PC-9 (cell line): ENCODE measurements at regions of chr6 and their contacts with region 1.

Region 1: DNA sequence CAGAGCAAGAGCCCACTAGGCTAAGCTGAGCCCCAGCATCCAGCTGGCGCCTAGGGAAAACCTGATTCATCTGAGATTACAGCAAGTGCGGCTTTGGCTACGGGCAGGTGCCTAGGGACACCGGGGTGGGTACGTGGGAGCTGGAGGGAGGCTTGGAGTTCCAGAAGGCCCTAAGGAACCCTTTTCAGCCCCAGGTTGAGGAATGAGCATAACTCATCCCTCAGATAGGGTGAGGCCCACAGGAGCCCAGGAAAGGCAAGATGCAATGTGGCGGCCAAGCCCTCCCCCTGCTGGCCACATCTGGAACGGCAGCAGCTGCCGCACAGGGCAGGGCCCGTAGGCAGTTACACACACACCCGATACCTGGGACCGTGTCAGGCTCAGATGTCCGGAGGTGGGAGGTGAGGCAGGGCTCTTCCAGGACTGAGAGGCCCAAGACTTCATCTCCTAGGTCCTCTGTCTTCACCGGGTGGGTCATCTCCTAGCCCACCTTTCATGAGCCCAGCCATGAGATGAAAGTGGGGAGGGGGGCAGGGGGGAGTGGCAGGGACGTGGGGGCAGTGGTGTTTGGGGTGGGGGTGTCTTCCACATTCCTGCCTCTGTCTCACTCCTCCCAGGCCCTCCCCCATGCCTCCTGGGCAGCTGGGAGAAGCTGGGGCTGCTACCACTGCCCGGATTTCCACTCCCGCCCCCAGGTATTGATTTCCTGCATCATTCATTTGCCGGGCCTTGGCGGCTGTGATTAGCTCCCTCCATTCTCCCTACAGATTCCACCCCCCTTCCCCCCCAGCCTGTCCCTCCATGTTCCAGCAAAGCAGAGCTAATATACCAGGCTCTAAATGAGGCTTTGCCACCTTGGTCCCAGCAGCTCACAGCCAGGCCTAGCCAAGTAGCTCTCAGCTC is 5.5 kb downstream of the MDGA1 start:
- DNase-seq: peak; percentile 58 to 82
- H3K4me3 ChIP-seq: no peak overlapping the region
- H3K27ac ChIP-seq: no peak overlapping the region
- H3K4me1 ChIP-seq: peaks cover 4% of the 10 kb centered on the region; the same call in 1 of the 2 replicates
- H3K27me3 ChIP-seq: peaks cover 27% of the 10 kb centered on the region
- CTCF ChIP-seq: peak; percentile 99

Region 2: DNA sequence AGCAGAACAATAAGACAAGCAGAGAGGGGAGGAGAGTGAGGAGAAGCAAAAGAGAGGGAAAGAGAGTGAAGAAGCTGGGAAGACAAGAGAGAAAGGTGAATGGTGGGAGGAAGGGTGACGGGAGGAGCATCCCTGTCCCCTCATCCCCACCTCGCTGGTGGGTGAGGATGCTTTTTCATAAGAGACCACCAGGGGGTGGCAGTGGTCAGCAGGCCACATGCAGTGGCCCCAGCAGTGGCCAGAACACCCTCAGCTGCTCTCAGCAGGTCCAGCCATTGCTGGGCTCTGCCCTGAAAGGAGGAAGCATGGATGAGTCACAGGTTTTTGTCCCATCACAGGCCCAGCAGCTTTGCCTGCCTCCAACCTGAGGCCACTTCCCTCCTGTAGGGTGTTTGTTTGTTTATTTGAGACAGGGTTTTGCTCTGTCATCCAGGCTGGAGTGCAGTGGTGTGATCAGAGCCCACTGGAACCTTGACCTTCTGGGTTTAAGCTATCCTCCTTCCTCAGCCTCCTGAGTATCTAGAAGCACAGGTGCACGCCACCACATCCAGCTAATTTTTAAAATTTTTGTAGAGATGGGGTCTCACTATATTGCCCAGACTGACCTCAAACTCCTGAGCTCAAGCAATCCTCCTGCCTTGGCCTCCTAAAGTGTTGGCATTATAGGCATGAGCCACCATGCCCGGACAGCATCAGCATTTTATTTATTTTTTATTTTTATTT is 662.7 kb before region 1 on chr6:
- CTCF ChIA-PET with region 1: no interaction called
- POLR2A ChIA-PET with region 1: no interaction called
- intact Hi-C with region 1: loop called (anchors 10 kb)
- DNase-seq: peak; percentile 84 to 96
- H3K4me3 ChIP-seq: no peak overlapping the region
- H3K27ac ChIP-seq: peak overlapping the region; percentile 81
- H3K4me1 ChIP-seq: peaks cover 25% of the 10 kb centered on the region
- H3K27me3 ChIP-seq: no peaks in the 10 kb centered on the region
- CTCF ChIP-seq: peak; percentile 83

Region 3: GRCh38 chr6:37483917-37484785 is 208.0 kb before region 1 on chr6:
- CTCF ChIA-PET with region 1: no interaction called
- POLR2A ChIA-PET with region 1: no interaction called
- intact Hi-C with region 1: loop called (anchors 2 kb)
- DNase-seq: peak in 1 of 2 experiments; percentile 65
- H3K4me3 ChIP-seq: no peak overlapping the region
- H3K27ac ChIP-seq: no peak overlapping the region
- H3K4me1 ChIP-seq: no peaks in the 10 kb centered on the region
- H3K27me3 ChIP-seq: no peaks in the 10 kb centered on the region
- CTCF ChIP-seq: peak; percentile 82

Region 4: DNA sequence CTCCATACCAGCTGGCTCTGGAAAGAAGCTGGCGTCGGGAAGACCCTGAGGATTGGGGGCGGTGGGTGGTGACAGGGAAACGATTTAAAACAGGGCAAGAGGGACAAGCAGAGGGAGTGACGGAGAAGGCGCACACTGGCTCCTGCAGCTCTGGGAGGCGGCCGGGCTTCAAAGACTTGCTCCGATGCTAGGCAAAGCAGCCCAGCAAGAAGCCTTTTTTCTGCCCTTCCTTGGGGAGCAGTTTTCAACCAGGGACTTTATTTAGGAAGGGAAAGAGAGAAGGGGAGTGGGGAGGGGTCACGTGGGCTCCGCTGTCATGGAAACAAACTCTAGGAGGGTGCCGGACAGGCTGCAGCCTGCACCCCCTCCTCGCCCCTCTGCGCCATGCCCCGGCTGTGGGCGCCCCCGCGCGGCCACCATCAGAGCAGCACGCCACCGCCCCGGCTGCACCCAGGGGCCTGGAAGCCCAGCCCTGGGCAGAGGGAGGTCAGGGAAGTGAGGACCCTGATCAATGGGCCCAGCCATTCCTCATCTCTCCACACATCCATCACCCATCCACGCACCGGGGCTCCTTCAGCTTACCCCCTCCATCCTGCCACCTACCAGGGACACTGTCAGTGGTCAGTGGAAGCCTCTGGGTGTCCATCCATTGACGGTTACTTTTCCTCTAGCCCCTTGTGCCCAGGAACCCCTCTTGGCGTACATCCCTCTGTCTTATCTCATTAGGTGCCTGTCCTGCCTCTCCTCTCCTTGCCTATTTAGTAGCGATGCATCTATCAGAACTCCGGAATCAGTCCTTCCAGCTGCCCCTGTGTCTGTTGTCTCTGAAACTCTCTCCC is 125.8 kb before region 1 on chr6:
- CTCF ChIA-PET with region 1: no interaction called
- POLR2A ChIA-PET with region 1: no interaction called
- intact Hi-C with region 1: loop called (anchors 2 kb)
- DNase-seq: peak in 1 of 2 experiments; percentile 54
- H3K4me3 ChIP-seq: no peak overlapping the region
- H3K27ac ChIP-seq: no peak overlapping the region
- H3K4me1 ChIP-seq: no peaks in the 10 kb centered on the region
- H3K27me3 ChIP-seq: no peaks in the 10 kb centered on the region
- CTCF ChIP-seq: peak; percentile 78

Region 5: GRCh38 chr6:37583261-37583660 is 108.9 kb before region 1 on chr6:
- CTCF ChIA-PET with region 1: no interaction called
- POLR2A ChIA-PET with region 1: no interaction called
- intact Hi-C with region 1: no loop called
- DNase-seq: no peak
- H3K4me3 ChIP-seq: no peak overlapping the region
- H3K27ac ChIP-seq: no peak overlapping the region
- H3K4me1 ChIP-seq: peaks cover 29% of the 10 kb centered on the region
- H3K27me3 ChIP-seq: no peaks in the 10 kb centered on the region
- CTCF ChIP-seq: no peak

Region 6: DNA sequence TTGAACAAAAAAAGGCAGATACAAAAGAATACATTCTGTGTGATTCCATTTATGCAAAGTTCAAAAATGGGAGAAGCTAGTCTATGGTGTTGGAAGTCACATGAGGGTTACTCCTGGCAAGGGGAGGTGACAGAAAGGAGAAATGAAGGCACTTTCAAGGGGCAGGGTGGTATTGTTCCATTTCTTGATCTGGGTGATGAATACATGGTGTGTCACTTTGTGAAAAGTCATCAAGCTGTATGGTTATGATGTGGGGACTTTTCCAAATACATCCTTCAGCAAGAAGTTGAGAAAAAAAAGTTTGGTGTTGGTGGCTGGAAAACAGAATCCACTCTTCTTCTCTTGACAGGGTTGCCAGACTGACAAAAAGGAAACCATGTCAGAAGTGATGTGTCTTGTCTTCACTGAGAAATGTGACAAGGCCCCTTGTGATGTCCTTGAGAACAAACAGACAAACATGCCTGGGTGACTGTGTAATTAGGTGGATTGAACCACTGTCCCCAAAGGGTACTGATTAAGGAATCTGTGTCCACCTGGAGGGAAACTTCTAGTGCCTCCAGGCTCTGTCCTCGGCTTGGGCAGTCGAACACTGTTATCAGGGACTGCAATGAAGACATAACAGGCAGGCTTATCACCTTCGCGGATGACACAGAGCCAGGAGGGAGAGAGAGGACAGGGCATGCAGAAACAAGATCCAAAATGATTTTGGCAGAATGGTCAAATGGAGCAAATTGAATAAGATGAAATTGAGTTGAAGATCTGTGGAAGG is 66.3 kb after region 1 on chr6:
- CTCF ChIA-PET with region 1: no interaction called
- POLR2A ChIA-PET with region 1: no interaction called
- intact Hi-C with region 1: no loop called
- DNase-seq: no peak
- H3K4me3 ChIP-seq: no peak overlapping the region
- H3K27ac ChIP-seq: no peak overlapping the region
- H3K4me1 ChIP-seq: no peaks in the 10 kb centered on the region
- H3K27me3 ChIP-seq: no peaks in the 10 kb centered on the region; the same call in 1 of the 2 replicates
- CTCF ChIP-seq: no peak

Region 7: DNA sequence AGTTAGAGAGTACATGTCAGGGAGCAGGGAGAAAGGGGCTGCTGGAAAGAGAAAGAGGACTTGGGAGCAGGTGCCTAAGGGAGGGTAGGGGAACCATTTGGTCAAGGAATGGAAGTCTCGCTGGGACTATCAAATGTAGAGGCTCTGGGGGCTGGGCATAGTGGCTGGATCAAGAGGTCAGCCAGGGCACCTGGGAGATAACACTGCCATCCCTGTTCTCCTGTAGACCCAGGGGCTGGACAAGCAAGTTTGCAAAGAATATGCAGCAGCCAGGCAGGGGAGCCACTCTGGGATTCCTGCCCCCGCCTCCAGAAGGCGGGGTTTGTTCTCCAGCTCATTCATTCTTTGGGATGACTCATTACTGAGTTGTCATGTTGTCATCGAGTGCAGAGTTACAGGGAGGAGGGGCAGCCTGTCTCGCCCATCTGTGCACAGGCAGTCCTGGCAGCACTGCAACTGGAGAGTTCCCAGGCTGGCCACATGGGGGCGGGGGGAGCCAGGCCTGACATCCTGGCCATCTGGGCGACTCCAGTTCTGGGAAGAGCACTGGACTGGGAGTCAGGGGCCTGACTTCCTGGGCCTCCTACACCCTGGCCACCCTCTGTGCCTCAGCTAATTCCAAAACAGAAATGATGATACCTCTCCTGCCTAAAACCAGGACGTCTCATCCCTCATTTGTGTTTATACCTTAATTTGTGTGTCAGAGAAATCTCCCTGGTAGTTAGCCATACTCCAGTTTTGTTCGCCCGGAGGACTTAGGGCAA is 99.2 kb after region 1 on chr6:
- CTCF ChIA-PET with region 1: no interaction called
- POLR2A ChIA-PET with region 1: no interaction called
- intact Hi-C with region 1: no loop called
- DNase-seq: peak; percentile 93
- H3K4me3 ChIP-seq: no peak overlapping the region
- H3K27ac ChIP-seq: no peak overlapping the region
- H3K4me1 ChIP-seq: peaks cover 16% of the 10 kb centered on the region
- H3K27me3 ChIP-seq: no peaks in the 10 kb centered on the region
- CTCF ChIP-seq: peak; percentile 95

Region 8: DNA sequence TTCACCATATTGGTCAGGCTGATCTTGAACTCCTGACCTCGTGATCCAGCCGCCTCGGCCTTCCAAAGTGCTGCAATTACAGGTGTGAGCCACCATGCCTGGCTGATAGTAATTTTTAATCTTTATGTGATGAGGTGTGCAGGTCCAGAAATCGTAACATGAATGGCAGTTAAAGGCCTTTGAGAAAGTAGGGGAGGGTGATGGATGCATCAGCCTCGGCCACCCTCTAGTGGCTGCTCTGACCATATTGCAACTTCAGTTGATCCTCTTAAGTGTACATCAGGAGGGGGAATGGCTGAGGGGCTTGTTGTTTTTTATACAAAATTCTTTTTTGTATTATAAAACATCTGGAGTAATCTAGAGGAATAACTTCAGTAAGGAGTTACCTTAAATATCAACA is 320.4 kb after region 1 on chr6:
- CTCF ChIA-PET with region 1: no interaction called
- POLR2A ChIA-PET with region 1: no interaction called
- intact Hi-C with region 1: loop called (anchors 10 kb)
- DNase-seq: no peak
- H3K4me3 ChIP-seq: no peak overlapping the region
- H3K27ac ChIP-seq: no peak overlapping the region
- H3K4me1 ChIP-seq: no peaks in the 10 kb centered on the region
- H3K27me3 ChIP-seq: no peaks in the 10 kb centered on the region
- CTCF ChIP-seq: peak; percentile 82

Region 9: DNA sequence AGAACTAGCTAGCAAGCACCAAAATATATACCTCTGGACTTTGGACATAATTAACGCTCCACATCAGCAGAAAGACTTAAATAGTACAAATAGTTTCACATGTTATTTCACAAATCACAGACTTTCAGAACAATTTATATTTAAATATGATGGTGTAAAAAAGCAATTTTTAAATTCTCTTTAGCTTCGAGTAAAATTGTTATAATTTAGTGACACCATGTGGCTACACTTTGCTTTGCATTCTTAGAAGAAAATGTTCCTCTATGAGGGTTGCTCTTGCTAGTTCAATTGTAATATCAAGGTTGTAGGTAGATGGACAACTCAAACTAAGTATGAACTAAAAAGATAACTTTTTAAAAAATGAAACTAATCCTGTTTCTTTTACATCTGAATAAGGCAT is 878.6 kb after region 1 on chr6:
- CTCF ChIA-PET with region 1: no interaction called
- POLR2A ChIA-PET with region 1: no interaction called
- intact Hi-C with region 1: loop called (anchors 10 kb)
- DNase-seq: no peak
- H3K4me3 ChIP-seq: no peak overlapping the region
- H3K27ac ChIP-seq: no peak overlapping the region
- H3K4me1 ChIP-seq: no peaks in the 10 kb centered on the region
- H3K27me3 ChIP-seq: no peaks in the 10 kb centered on the region
- CTCF ChIP-seq: peak; percentile 63